Activated CD4-positive, alpha-beta T cell treated with anti-CD3 and anti-CD28 coated beads for 36 hours (primary cell): ENCODE measurements at regions of chr4 and their contacts with region 1.

Region 1: GRCh38 chr4:159206427-159206871 is 103.6 kb downstream of the RAPGEF2 start:
- DNase-seq: peak; percentile 76
- ATAC-seq: peak; percentile 94
- H3K4me3 Mint-ChIP-seq: peak overlapping the region; percentile 62
- H3K27ac Mint-ChIP-seq: peak overlapping the region; percentile 89
- H3K4me1 Mint-ChIP-seq: peaks cover 52% of the 10 kb centered on the region
- H3K27me3 Mint-ChIP-seq: no peaks in the 10 kb centered on the region

Region 2: GRCh38 chr4:158259955-158260575 is 946.4 kb before region 1 on chr4:
- CTCF ChIA-PET with region 1: no interaction called
- POLR2A ChIA-PET with region 1: no interaction called
- intact Hi-C with region 1: loop called in 1 of 2 experiments (anchors 1 kb)
- DNase-seq: no peak
- ATAC-seq: no peak
- H3K4me3 Mint-ChIP-seq: no peak overlapping the region
- H3K27ac Mint-ChIP-seq: no peak overlapping the region
- H3K4me1 Mint-ChIP-seq: no peaks in the 10 kb centered on the region
- H3K27me3 Mint-ChIP-seq: peaks cover 7% of the 10 kb centered on the region

Region 3: GRCh38 chr4:158729716-158730559 is 476.5 kb before region 1 on chr4:
- CTCF ChIA-PET with region 1: interaction called, 4 read pairs
- POLR2A ChIA-PET with region 1: interaction called, 5 read pairs
- intact Hi-C with region 1: loop called in 1 of 2 experiments (anchors 1 kb)
- DNase-seq: peak; percentile 72
- ATAC-seq: peak; percentile 87
- H3K4me3 Mint-ChIP-seq: no peak overlapping the region
- H3K27ac Mint-ChIP-seq: no peak overlapping the region
- H3K4me1 Mint-ChIP-seq: peaks cover 25% of the 10 kb centered on the region
- H3K27me3 Mint-ChIP-seq: peaks cover 29% of the 10 kb centered on the region

Region 4: GRCh38 chr4:158768555-158769174 is 437.8 kb before region 1 on chr4 and contains the start of gene FNIP2:
- CTCF ChIA-PET with region 1: no interaction called
- POLR2A ChIA-PET with region 1: no interaction called
- intact Hi-C with region 1: loop called in 1 of 2 experiments (anchors 1 kb)
- DNase-seq: peak; percentile 81
- ATAC-seq: peak; percentile 81
- H3K4me3 Mint-ChIP-seq: peak within 1 kb of the TSS; percentile 97
- H3K27ac Mint-ChIP-seq: peak within 1 kb of the TSS; percentile 93
- H3K4me1 Mint-ChIP-seq: peaks cover 41% of the 10 kb centered on the region
- H3K27me3 Mint-ChIP-seq: no peaks in the 10 kb centered on the region
- total RNA-seq, gene FNIP2: 11.6 to 13.0 TPM

Region 5: DNA sequence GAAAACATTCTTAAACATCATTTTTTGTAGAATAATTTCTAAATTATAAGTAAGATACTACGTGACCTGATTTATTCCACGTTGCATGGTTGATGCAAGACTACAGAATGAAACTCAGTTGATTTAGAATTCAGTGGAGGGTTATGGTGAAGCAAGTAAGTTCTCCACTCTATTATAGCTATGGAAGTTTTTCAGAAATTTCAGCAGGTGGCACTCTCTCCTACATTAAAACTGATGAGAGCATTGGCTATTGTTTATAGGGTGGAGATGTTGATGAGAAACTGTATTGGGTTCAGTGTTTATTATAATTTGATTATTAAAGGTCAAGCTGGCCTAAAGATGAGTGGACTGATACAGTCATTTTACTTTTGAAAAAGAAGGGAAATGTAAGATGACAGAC is 349.6 kb before region 1 on chr4:
- CTCF ChIA-PET with region 1: interaction called, 31 read pairs
- POLR2A ChIA-PET with region 1: no interaction called
- intact Hi-C with region 1: loop called (anchors 1 kb)
- DNase-seq: no peak
- ATAC-seq: peak; percentile 87
- H3K4me3 Mint-ChIP-seq: no peak overlapping the region
- H3K27ac Mint-ChIP-seq: no peak overlapping the region
- H3K4me1 Mint-ChIP-seq: peaks cover 2% of the 10 kb centered on the region
- H3K27me3 Mint-ChIP-seq: no peaks in the 10 kb centered on the region

Region 6: DNA sequence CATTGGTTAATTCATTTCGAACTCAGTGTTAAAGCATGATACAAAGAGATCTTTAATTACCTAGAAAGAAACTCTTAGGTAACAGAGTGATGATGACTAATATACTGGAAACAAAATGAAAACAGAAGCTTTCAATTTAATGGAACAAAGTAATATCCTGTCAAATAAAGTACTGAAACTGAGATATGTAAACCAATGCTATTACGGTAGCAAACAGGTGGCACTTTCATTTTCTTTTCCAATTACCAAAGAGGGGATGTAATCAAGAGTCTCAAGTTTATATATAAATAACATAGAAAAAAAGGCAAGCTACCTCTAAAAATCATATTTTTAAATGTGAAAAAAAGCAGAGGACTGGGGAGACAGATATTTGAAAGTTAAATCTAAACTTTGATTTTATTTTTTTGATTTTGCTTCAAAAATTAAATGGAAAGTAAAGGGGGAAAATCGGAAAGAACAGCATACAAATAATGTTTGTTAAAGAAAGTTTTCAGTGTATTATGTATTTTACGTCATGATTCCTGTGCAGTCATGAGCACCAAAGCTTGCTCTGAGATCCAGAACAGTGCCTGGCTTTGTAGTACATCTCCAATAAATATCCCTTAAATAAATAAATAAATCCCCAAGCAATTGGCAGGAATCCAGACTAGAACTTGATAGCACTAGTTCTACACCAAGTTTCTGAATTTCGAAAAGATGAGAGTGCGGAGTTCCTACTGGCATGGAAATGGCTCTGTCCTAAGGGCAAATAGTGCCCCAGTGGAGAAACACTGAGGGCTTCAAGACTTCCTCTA is 128.6 kb before region 1 on chr4:
- CTCF ChIA-PET with region 1: no interaction called
- POLR2A ChIA-PET with region 1: no interaction called
- intact Hi-C with region 1: loop called (anchors 5 to 10 kb)
- DNase-seq: no peak
- ATAC-seq: peak; percentile 84
- H3K4me3 Mint-ChIP-seq: peak overlapping the region; percentile 21
- H3K27ac Mint-ChIP-seq: peak overlapping the region; percentile 47
- H3K4me1 Mint-ChIP-seq: peaks cover 25% of the 10 kb centered on the region
- H3K27me3 Mint-ChIP-seq: no peaks in the 10 kb centered on the region